PC-3 (cell line): ENCODE measurements at regions of chr12 and their contacts with region 1.

Region 1: DNA sequence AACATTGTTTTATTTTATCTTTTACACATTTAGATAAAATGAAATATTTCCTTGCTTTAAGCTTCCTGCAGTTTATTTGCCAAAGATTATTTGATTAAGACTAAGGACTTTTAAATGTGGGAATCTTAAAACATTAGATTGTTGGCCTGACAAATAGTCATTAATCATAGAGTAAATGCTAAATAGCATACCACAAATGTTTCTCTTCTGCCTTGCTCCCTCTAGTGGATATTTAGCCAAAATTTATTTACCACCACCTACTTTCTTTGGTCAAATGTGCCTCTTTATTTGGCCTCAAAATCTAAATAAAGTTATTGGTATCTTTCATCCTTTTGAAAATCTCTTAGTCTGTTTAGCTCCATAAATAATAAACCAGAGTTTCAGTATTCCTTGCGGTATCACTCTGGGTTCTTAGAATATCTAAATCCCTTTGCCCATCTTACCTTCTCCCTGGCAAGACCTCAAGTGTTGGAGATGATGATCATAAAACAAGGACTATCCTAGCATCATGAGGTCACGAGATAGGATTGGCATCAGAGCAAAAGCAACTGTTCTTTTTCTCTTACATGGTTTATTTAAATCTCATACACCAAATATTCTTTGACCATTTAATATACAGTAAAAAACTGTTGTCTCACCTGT is 150.6 kb upstream of the AEBP2 start:
- DNase-seq: peak; percentile 61
- ATAC-seq: peak; percentile 51
- H3K4me3 ChIP-seq: no peak overlapping the region
- H3K27ac ChIP-seq: no peak overlapping the region
- H3K4me1 ChIP-seq: no peaks in the 10 kb centered on the region
- H3K27me3 ChIP-seq: no peaks in the 10 kb centered on the region
- CTCF ChIP-seq: peak; percentile 69

Region 2: GRCh38 chr12:18146363-18146762 is 1142.4 kb before region 1 on chr12:
- CTCF ChIA-PET with region 1: no interaction called
- POLR2A ChIA-PET with region 1: no interaction called
- intact Hi-C with region 1: no loop called
- DNase-seq: peak; percentile 15
- ATAC-seq: no peak
- H3K4me3 ChIP-seq: no peak overlapping the region
- H3K27ac ChIP-seq: no peak overlapping the region
- H3K4me1 ChIP-seq: peaks cover 10% of the 10 kb centered on the region
- H3K27me3 ChIP-seq: no peaks in the 10 kb centered on the region
- CTCF ChIP-seq: no peak

Region 3: GRCh38 chr12:19181666-19182426 is 106.9 kb before region 1 on chr12:
- CTCF ChIA-PET with region 1: no interaction called
- POLR2A ChIA-PET with region 1: no interaction called
- intact Hi-C with region 1: loop called (anchors 1 kb)
- DNase-seq: peak; percentile 13
- ATAC-seq: no peak
- H3K4me3 ChIP-seq: no peak overlapping the region
- H3K27ac ChIP-seq: no peak overlapping the region
- H3K4me1 ChIP-seq: no peaks in the 10 kb centered on the region
- H3K27me3 ChIP-seq: no peaks in the 10 kb centered on the region
- CTCF ChIP-seq: peak; percentile 42; the same call in 1 of the 2 replicates

Region 4: DNA sequence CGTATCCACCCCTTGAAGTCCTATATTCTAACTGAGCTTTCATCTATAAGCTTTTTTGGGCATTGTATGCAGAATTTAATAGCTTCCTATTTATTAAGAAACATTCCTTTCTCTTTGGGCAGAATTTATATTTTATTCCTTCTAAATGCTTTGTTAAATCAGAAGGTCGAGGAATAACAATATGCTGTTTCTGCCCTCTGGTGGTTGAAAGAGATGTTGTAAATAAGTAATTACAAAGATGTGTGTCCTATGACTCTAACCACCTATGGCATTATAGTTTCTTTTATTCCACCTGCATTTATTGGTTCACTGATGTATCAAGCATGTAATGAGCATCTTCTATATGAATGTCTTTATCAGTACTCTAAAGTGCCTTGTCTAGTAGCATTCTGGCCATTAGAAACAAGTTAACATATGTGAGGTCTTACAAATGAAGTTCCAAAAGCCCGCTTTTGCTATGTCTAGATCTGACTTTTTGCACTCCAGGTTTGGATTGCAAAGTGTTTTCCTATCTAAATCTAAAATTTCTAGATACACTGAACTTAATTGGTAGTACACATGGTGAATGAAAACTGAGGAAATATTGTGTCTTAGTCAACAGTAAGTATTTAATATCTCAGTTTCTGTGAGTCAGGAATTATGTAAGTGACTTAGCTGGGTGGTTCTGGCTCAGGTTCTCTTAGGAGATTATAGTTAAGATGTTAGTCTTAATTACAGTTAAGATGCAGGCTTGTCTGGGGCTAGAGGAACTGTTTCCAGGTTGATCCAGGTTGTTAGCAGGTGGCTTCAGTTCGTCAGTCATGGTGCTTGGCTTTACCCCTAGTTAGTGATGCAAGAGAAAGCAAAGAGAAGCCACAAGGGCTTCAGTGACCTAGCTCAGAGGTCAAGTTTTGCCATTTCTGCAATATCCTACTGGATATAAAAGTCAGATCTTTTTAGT is 101.7 kb before region 1 on chr12:
- CTCF ChIA-PET with region 1: no interaction called
- POLR2A ChIA-PET with region 1: no interaction called
- intact Hi-C with region 1: loop called (anchors 1 kb)
- DNase-seq: peak; percentile 68
- ATAC-seq: peak; percentile 35; the same call in 1 of the 2 replicates
- H3K4me3 ChIP-seq: no peak overlapping the region
- H3K27ac ChIP-seq: no peak overlapping the region
- H3K4me1 ChIP-seq: peaks cover 5% of the 10 kb centered on the region
- H3K27me3 ChIP-seq: no peaks in the 10 kb centered on the region
- CTCF ChIP-seq: peak; percentile 74

Region 5: DNA sequence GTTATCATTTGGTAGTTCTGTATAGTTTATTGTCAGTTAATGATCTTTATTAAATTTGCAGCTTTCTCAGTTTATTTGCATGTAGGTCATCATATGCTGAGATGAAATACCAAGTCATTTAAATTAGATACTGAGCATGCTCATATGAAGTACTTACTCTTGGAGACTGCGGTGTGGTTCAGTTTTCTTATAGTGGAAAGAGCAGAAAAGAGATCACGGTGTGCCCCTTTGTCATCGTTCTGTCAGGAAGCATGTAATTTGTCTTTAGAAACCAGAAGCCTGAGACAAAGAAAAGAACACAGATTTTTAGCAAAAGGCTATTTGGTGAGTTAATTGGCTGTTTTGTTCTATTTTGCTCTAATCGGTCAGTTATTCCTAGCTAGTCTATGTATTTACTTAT is 83.6 kb before region 1 on chr12:
- CTCF ChIA-PET with region 1: no interaction called
- POLR2A ChIA-PET with region 1: no interaction called
- intact Hi-C with region 1: loop called (anchors 5 kb)
- DNase-seq: no peak
- ATAC-seq: no peak
- H3K4me3 ChIP-seq: no peak overlapping the region
- H3K27ac ChIP-seq: no peak overlapping the region
- H3K4me1 ChIP-seq: peaks cover 26% of the 10 kb centered on the region
- H3K27me3 ChIP-seq: no peaks in the 10 kb centered on the region
- CTCF ChIP-seq: no peak